CD4-positive, alpha-beta T cell (primary cell): ENCODE measurements at regions of chr3 and their contacts with region 1.

Region 1: GRCh38 chr3:187000711-187001151 is 70.4 kb downstream of the ST6GAL1 start:
- DNase-seq: peak in 3 of 14 experiments; percentile 36 to 47 (median 39)
- ATAC-seq: no peak
- H3K4me3 ChIP-seq: no peak overlapping the region
- H3K4me3 Mint-ChIP-seq: peak overlapping the region; percentile 11
- H3K27ac ChIP-seq: peak overlapping the region in 1 of 2 donors; percentile 18
- H3K27ac Mint-ChIP-seq: peak overlapping the region; percentile 72
- H3K4me1 ChIP-seq: peaks cover 40% of the 10 kb centered on the region
- H3K4me1 Mint-ChIP-seq: peaks cover 74% of the 10 kb centered on the region
- H3K27me3 ChIP-seq: no peaks in the 10 kb centered on the region
- H3K27me3 Mint-ChIP-seq: no peaks in the 10 kb centered on the region
- CTCF ChIP-seq: no peak

Region 2: GRCh38 chr3:186953011-186953487 is 47.7 kb before region 1 on chr3:
- CTCF ChIA-PET with region 1: no interaction called
- POLR2A ChIA-PET with region 1: no interaction called
- intact Hi-C with region 1: no loop called
- DNase-seq: peak in 4 of 14 experiments; percentile 25 to 45 (median 26)
- ATAC-seq: peak; percentile 58
- H3K4me3 ChIP-seq: no peak overlapping the region
- H3K4me3 Mint-ChIP-seq: peak overlapping the region; percentile 21
- H3K27ac ChIP-seq: peak overlapping the region in 1 of 2 donors; percentile 43
- H3K27ac Mint-ChIP-seq: peak overlapping the region; percentile 78
- H3K4me1 ChIP-seq: peaks cover 61% of the 10 kb centered on the region
- H3K4me1 Mint-ChIP-seq: peaks cover 90% of the 10 kb centered on the region
- H3K27me3 ChIP-seq: no peaks in the 10 kb centered on the region
- H3K27me3 Mint-ChIP-seq: no peaks in the 10 kb centered on the region
- CTCF ChIP-seq: no peak

Region 3: DNA sequence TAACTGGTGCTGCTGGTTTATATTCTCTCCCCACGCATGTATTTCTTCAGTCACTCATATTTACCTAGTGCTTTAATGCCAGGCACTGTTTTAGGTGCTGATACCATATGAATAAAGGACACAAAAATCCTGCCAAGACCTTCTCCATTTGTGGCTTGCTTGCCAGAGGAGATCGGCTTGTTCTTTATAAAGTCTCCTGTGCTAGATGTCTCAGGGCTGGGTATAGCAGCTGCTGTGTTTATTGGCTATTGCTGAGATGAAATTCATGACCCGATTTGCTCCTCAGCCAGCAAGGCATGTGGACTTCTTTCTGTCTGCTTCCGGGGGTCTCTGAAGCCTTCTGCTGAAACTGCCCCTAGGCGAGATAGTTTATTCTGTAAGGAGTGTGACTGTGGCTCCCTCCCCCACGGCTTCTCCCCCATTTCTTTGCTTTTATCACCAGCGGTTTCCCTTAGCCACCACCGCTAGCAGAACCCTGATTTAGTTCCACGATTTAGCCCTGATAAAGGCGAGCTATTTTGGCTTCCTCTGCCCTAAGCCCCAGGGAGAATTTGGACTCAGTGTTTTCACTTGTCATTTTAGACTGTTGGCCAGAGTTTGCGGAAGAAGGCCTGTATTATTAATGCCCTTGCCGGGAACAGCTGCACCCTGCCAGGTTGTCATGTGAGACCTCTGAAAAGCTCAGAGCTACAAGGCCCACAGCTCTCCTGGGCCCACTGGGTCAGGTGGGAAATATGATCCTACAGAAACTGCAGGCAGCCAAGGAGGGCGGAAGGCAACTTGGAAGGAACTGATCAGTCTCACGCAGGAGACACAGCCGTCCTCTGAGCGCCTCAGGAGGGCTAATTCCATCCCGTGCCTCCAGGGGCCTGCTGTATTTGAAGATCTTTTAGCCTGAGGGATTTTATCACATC is 23.6 kb before region 1 on chr3:
- CTCF ChIA-PET with region 1: no interaction called
- POLR2A ChIA-PET with region 1: no interaction called
- intact Hi-C with region 1: loop called in 1 of 2 experiments (anchors 2 kb)
- DNase-seq: no peak
- ATAC-seq: no peak
- H3K4me3 ChIP-seq: no peak overlapping the region
- H3K4me3 Mint-ChIP-seq: no peak overlapping the region
- H3K27ac ChIP-seq: no peak overlapping the region
- H3K27ac Mint-ChIP-seq: no peak overlapping the region
- H3K4me1 ChIP-seq: no peaks in the 10 kb centered on the region
- H3K4me1 Mint-ChIP-seq: peaks cover 10% of the 10 kb centered on the region
- H3K27me3 ChIP-seq: no peaks in the 10 kb centered on the region
- H3K27me3 Mint-ChIP-seq: no peaks in the 10 kb centered on the region
- CTCF ChIP-seq: no peak

Region 4: DNA sequence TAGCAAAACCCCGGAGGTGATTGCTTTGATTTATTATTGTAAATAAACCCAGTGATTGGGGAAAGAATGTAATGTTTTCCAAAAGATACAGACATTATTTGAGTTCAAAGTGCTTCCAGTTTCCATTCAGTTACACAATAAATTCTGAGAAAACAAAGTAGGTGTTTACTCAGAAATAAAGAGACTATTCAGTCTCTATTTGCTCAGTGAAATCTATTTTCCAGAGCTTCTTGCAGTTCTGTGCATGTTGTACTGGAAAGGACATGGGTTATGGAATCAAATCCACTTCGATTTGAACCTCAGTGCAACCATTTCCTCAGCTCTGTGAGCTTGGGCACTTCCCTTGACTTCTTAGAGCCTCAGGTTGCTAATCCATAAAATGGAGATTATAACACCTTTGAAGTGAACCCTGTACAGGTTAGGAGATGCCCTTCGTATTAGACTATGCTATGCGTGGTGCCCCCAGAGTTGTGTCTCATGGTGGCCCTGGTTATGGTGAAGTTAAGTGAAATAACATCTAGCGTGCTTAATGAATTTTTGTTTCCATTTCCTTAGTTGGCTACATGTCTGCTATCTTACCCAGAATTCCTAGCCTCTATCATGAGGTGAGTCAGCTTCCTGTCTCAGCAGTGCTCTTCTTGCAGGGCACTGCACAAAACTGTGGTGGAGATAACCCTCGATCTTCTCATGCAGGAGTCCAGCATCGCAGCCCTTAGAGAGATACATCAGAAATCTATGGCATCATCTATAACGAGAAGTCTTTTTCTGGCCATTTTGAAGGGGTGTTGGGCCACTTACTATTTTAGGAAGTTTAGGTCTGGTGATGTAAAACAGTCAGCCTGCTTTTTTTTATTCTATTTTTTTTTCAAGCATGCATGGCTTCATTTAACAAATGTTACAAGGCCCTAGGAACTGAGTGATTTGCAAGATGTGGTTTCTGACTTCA is 40.9 kb after region 1 on chr3:
- CTCF ChIA-PET with region 1: no interaction called
- POLR2A ChIA-PET with region 1: no interaction called
- intact Hi-C with region 1: loop called in 1 of 2 experiments (anchors 5 kb)
- DNase-seq: peak in 12 of 14 experiments; percentile 24 to 84 (median 54)
- ATAC-seq: peak; percentile 96
- H3K4me3 ChIP-seq: no peak overlapping the region
- H3K4me3 Mint-ChIP-seq: peak overlapping the region; percentile 40
- H3K27ac ChIP-seq: peak overlapping the region; percentile 75 to 84
- H3K27ac Mint-ChIP-seq: peak overlapping the region; percentile 93
- H3K4me1 ChIP-seq: peaks cover 70% of the 10 kb centered on the region
- H3K4me1 Mint-ChIP-seq: peaks cover 83% of the 10 kb centered on the region
- H3K27me3 ChIP-seq: no peaks in the 10 kb centered on the region
- H3K27me3 Mint-ChIP-seq: no peaks in the 10 kb centered on the region
- CTCF ChIP-seq: no peak